ENCODE measurements at regions of chr2 and their contacts with region 1.

Region 1: DNA sequence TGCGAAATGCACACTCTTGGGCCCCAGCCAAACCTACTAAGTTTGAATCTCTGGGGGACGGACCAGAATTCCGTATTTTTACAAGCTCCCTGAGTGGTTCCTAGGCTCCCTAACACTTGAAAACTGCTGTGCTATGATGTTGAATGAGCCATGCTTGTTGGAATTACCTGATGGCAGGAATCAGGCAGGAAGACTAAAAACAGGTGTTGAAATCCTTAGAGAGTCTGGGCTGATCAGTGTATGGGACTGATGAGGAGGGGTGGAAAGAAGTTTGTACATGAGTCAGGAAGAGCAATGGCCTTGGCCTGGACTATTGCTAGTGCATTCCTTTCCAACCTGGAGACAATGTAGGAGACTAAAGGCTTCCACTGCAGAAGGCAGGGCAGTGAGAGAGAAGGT is 24.9 kb upstream of the TMBIM1 start:
- DNase-seq: no peak
- ATAC-seq: no peak
- H3K4me3 Mint-ChIP-seq: no peak overlapping the region
- H3K27ac Mint-ChIP-seq: peak overlapping the region; percentile 78
- H3K4me1 Mint-ChIP-seq: peaks cover 41% of the 10 kb centered on the region
- H3K27me3 Mint-ChIP-seq: no peaks in the 10 kb centered on the region

Region 2: DNA sequence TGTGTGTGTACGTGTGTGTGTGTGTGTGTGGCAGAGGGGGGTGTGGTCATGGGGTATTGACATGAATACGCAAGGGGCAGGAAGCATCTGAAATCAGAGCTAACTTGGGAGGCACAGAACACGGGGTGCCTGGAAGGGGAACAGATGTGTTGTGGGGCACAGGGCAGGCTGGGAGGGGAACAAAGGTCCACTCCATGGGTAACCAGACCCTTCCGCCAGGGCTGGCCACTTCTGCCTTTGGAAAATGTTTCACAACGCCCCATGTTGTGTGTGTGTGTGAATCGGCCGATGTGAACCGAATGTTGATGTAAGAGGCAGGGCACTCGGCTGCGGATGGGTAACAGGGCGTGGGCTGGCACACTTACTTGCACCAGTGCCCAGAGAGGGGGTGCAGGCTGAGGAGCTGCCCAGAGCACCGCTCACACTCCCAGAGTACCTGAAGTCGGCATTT is 64.7 kb after region 1 on chr2 and contains the start of gene SLC11A1:
- CTCF ChIA-PET with region 1: no interaction called
- POLR2A ChIA-PET with region 1: interaction called, 15 read pairs
- intact Hi-C with region 1: no loop called
- DNase-seq: no peak
- ATAC-seq: no peak
- H3K4me3 Mint-ChIP-seq: no peak within 1 kb of the TSS
- H3K27ac Mint-ChIP-seq: no peak within 1 kb of the TSS
- H3K4me1 Mint-ChIP-seq: no peaks in the 10 kb centered on the region
- H3K27me3 Mint-ChIP-seq: no peaks in the 10 kb centered on the region
- total RNA-seq, gene SLC11A1: 0.05 to 0.09 TPM